Activated CD4-positive, alpha-beta T cell treated with anti-CD3 and anti-CD28 coated beads, Interleukin-2, amount 10 ng/mL, durations not matched to agents 24 days and 14 days (primary cell): ENCODE measurements at regions of chr20 and their contacts with region 1.

Region 1: GRCh38 chr20:50561379-50562078 is 51.3 kb downstream of the PTPN1 start:
- DNase-seq: peak; percentile 79
- H3K4me3 Mint-ChIP-seq: peak overlapping the region; percentile 78
- H3K27ac Mint-ChIP-seq: peak overlapping the region; percentile 94
- H3K4me1 Mint-ChIP-seq: peaks cover 62% of the 10 kb centered on the region
- H3K27me3 Mint-ChIP-seq: no peaks in the 10 kb centered on the region

Region 2: DNA sequence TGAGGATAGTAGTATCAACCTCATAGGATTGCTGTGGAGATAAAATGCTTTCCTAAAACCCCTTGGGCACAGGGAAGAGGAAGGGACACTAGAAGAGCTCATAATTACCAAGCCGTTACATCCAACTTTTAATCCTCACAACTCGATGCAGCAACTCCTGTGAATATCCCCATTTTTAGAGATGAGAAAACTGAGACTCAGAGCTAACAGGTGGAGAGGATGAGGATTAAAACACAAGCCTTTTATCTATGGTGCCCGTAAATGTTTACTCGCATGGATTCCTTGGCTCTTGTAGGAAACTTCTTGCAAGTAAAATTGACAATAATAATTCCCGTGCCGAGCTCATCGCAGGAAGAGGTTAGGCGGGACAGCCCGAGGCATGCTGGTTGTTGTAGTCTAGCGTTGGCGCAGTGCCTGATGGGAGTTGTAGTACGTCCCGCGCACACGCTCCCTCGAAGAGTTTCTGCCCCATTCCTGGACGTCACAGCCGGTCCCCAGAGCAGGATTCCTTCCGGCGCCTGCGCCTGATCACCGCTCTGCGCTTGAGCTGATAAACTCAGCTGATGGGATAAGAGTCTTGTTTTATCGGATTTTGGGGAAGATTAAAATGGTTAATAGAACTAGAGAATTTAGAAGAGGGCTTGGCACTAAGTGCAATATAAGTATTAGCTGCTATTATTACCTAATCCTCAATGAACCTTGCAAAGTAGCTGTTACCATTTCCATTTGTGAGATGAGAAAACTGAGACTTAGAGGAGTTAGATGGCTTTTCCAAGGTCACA is 445.7 kb before region 1 on chr20:
- intact Hi-C with region 1: loop called (anchors 5 kb)
- DNase-seq: peak; percentile 97
- H3K4me3 Mint-ChIP-seq: peak overlapping the region; percentile 98
- H3K27ac Mint-ChIP-seq: peak overlapping the region; percentile 85
- H3K4me1 Mint-ChIP-seq: peaks cover 47% of the 10 kb centered on the region
- H3K27me3 Mint-ChIP-seq: no peaks in the 10 kb centered on the region

Region 3: DNA sequence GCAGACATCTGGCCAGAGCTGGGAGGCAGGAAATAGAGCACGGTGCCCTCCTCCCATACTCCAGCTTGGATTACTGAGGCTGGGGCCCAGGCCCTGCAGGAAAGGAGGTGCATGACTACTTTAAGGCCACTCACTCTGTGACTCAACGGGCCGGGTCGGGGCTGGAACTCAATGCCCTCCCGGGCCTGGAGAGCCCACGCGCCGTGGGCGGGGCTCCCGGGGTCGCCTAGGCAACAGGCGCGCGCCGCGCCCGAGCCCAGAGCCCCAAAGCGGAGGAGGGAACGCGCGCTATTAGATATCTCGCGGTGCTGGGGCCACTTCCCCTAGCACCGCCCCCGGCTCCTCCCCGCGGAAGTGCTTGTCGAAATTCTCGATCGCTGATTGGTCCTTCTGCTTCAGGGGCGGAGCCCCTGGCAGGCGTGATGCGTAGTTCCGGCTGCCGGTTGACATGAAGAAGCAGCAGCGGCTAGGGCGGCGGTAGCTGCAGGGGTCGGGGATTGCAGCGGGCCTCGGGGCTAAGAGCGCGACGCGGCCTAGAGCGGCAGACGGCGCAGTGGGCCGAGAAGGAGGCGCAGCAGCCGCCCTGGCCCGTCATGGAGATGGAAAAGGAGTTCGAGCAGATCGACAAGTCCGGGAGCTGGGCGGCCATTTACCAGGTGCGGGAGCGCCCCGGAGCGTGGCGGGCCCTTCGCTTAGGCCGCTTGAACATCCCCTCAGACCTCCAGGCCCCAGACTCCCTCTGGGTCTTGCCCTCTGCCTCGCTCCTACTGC is 51.4 kb before region 1 on chr20 and contains the start of gene PTPN1:
- intact Hi-C with region 1: loop called (anchors 1 kb)
- DNase-seq: peak; percentile 100
- H3K4me3 Mint-ChIP-seq: peak within 1 kb of the TSS; percentile 98
- H3K27ac Mint-ChIP-seq: peak within 1 kb of the TSS; percentile 93
- H3K4me1 Mint-ChIP-seq: peaks cover 44% of the 10 kb centered on the region
- H3K27me3 Mint-ChIP-seq: no peaks in the 10 kb centered on the region
- total RNA-seq, gene PTPN1: 61.4 and 62.9 TPM in 2 replicates

Region 4: DNA sequence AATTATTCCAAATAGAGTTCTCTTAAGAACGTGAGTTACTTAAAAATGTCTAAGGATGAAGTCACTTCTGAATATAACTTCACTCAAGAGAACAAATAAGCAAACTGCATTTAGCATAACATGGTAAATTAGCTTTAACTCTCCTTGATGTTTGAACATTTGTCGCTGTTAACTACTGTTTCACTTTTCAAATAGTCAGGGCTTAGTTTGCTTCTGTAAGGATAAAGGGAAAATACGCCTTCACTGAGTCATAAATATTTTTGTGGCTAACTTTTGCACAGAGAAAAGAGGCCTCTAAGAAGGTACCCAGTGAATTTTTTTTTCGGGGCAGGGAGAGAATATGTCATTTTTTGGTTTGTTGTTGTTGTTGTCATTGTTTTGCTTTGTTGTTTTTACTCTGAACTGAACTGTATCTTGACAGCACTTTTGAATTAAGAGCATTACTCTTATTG is 43.2 kb before region 1 on chr20:
- intact Hi-C with region 1: loop called (anchors 1 kb)
- DNase-seq: peak; percentile 74
- H3K4me3 Mint-ChIP-seq: peak overlapping the region; percentile 85
- H3K27ac Mint-ChIP-seq: peak overlapping the region; percentile 94
- H3K4me1 Mint-ChIP-seq: peaks cover 76% of the 10 kb centered on the region
- H3K27me3 Mint-ChIP-seq: no peaks in the 10 kb centered on the region

Region 5: GRCh38 chr20:50546729-50547314 is 14.7 kb before region 1 on chr20:
- intact Hi-C with region 1: loop called (anchors 1 kb)
- DNase-seq: peak; percentile 81
- H3K4me3 Mint-ChIP-seq: peak overlapping the region; percentile 77
- H3K27ac Mint-ChIP-seq: peak overlapping the region; percentile 90
- H3K4me1 Mint-ChIP-seq: peaks cover 54% of the 10 kb centered on the region
- H3K27me3 Mint-ChIP-seq: no peaks in the 10 kb centered on the region

Region 6: GRCh38 chr20:50588034-50588611 is 26.6 kb after region 1 on chr20:
- intact Hi-C with region 1: no loop called
- DNase-seq: peak; percentile 92
- H3K4me3 Mint-ChIP-seq: no peak overlapping the region
- H3K27ac Mint-ChIP-seq: peak overlapping the region; percentile 17
- H3K4me1 Mint-ChIP-seq: no peaks in the 10 kb centered on the region
- H3K27me3 Mint-ChIP-seq: no peaks in the 10 kb centered on the region

Region 7: GRCh38 chr20:50624270-50625016 is 62.9 kb after region 1 on chr20:
- intact Hi-C with region 1: no loop called
- DNase-seq: no peak
- H3K4me3 Mint-ChIP-seq: no peak overlapping the region
- H3K27ac Mint-ChIP-seq: no peak overlapping the region
- H3K4me1 Mint-ChIP-seq: no peaks in the 10 kb centered on the region
- H3K27me3 Mint-ChIP-seq: no peaks in the 10 kb centered on the region